Activated CD4-positive, alpha-beta T cell treated with anti-CD3 and anti-CD28 coated beads for 36 hours (primary cell): ENCODE measurements at regions of chr2 and their contacts with region 1.

Region 1: DNA sequence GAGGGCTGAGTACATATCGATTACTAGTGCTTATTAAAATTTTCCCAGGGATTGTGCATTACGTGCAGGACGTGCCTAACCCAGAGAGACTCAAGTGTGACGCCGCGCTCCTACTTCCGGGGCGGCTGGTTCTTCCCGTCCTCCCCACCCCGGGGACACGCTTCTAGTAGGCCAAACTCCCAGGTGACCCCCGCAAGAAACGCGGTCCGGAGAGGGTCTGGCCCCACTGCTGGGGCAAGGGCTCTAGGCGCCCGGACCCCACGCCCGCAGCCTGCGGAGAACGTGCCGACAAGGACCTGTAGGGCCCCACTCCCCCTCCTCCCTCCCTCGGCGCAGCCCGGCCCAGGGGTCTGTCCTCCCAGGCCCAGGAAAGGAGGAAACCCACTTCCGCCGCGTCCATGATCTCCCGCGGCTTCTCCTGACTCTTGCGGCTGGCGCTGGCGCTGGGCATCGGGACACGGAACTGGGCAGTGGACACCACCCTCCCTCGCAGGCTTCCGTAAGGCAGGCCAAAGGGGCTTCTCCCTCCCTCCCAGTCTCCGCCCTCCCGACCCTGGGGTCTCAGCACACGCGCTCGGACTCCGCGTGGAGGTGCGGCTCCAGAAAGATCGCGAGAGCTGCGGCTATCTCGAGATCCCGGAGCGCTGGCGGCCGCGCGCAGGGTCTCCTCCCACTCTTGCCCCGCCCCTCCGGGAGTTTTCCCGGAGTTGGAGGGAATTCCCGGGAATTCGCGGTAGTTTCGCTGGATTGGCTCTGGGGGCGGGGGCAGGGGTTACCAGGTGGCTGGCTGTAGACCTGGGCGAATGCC is at the start of gene DARS1:
- DNase-seq: peak; percentile 92
- ATAC-seq: peak; percentile 82
- H3K4me3 Mint-ChIP-seq: peak within 1 kb of the TSS; percentile 93
- H3K27ac Mint-ChIP-seq: peak within 1 kb of the TSS; percentile 97
- H3K4me1 Mint-ChIP-seq: peaks cover 44% of the 10 kb centered on the region
- H3K27me3 Mint-ChIP-seq: no peaks in the 10 kb centered on the region
- total RNA-seq, gene DARS1: 174 to 190 TPM

Region 2: GRCh38 chr2:135531231-135532228 is 453.7 kb before region 1 on chr2 and contains the start of gene R3HDM1:
- CTCF ChIA-PET with region 1: no interaction called
- POLR2A ChIA-PET with region 1: no interaction called
- intact Hi-C with region 1: loop called in 1 of 2 experiments (anchors 1 kb)
- DNase-seq: peak; percentile 96
- ATAC-seq: peak; percentile 88
- H3K4me3 Mint-ChIP-seq: no peak within 1 kb of the TSS
- H3K27ac Mint-ChIP-seq: peak within 1 kb of the TSS; percentile 84
- H3K4me1 Mint-ChIP-seq: peaks cover 32% of the 10 kb centered on the region
- H3K27me3 Mint-ChIP-seq: no peaks in the 10 kb centered on the region
- total RNA-seq, gene R3HDM1: 62.6 to 100.0 TPM

Region 3: DNA sequence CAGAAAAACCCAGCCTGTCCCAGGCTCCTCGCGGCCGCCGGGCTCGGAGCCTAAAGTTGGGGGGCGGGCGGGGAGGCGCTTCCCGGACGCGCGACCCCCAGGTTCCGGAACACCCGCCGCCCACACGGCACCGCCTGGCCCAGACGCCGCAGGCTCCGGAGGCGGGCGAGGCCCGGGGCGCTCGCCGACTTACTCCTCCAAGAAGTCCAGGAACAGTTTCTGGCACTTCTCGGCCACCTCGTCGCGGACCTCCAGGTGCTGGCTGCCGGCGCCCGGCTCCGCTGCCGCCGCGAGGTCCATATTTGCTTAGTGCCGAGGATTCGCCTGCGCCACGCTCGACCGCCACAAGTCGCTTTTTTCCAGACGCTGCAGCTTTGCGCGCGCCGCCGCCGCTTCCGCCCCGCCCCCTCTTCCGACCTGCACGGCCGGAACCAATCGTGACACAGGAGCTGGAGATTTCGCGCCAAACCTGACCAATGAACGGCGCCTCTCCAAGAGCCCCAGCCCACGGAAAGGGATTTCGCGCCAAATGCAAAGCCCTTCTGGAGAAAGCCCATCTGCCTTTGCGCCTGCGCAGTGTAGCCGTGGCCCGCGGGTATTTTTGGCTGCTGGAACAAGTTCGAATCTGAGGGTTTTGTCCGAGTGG is 109.0 kb before region 1 on chr2 and contains the start of gene MCM6:
- CTCF ChIA-PET with region 1: no interaction called
- POLR2A ChIA-PET with region 1: interaction called, 9 read pairs
- intact Hi-C with region 1: loop called (anchors 1 to 2 kb)
- DNase-seq: peak; percentile 100
- ATAC-seq: peak; percentile 88
- H3K4me3 Mint-ChIP-seq: peak within 1 kb of the TSS; percentile 86
- H3K27ac Mint-ChIP-seq: peak within 1 kb of the TSS; percentile 96
- H3K4me1 Mint-ChIP-seq: peaks cover 44% of the 10 kb centered on the region
- H3K27me3 Mint-ChIP-seq: no peaks in the 10 kb centered on the region
- total RNA-seq, gene MCM6: 228 to 276 TPM

Region 4: GRCh38 chr2:135960656-135961551 is 24.3 kb before region 1 on chr2:
- CTCF ChIA-PET with region 1: interaction called, 5 read pairs
- POLR2A ChIA-PET with region 1: interaction called, 3 read pairs
- intact Hi-C with region 1: loop called in 1 of 2 experiments (anchors 2 kb)
- DNase-seq: no peak
- ATAC-seq: peak; percentile 63
- H3K4me3 Mint-ChIP-seq: peak overlapping the region; percentile 50
- H3K27ac Mint-ChIP-seq: peak overlapping the region; percentile 90
- H3K4me1 Mint-ChIP-seq: peaks cover 54% of the 10 kb centered on the region
- H3K27me3 Mint-ChIP-seq: no peaks in the 10 kb centered on the region

Region 5: GRCh38 chr2:136059036-136059472 is 73.8 kb after region 1 on chr2:
- CTCF ChIA-PET with region 1: interaction called, 7 read pairs
- POLR2A ChIA-PET with region 1: interaction called, 8 read pairs
- intact Hi-C with region 1: loop called (anchors 1 kb)
- DNase-seq: no peak
- ATAC-seq: no peak
- H3K4me3 Mint-ChIP-seq: no peak overlapping the region
- H3K27ac Mint-ChIP-seq: no peak overlapping the region
- H3K4me1 Mint-ChIP-seq: peaks cover 49% of the 10 kb centered on the region
- H3K27me3 Mint-ChIP-seq: no peaks in the 10 kb centered on the region

Region 6: GRCh38 chr2:136362676-136363390 is 377.6 kb after region 1 on chr2:
- CTCF ChIA-PET with region 1: no interaction called
- POLR2A ChIA-PET with region 1: no interaction called
- intact Hi-C with region 1: loop called in 1 of 2 experiments (anchors 1 kb)
- DNase-seq: peak; percentile 65
- ATAC-seq: peak; percentile 82
- H3K4me3 Mint-ChIP-seq: no peak overlapping the region
- H3K27ac Mint-ChIP-seq: peak overlapping the region; percentile 63
- H3K4me1 Mint-ChIP-seq: peaks cover 54% of the 10 kb centered on the region
- H3K27me3 Mint-ChIP-seq: peaks cover 12% of the 10 kb centered on the region